ENCODE measurements at regions of chr3 and their contacts with region 1.

Region 1: DNA sequence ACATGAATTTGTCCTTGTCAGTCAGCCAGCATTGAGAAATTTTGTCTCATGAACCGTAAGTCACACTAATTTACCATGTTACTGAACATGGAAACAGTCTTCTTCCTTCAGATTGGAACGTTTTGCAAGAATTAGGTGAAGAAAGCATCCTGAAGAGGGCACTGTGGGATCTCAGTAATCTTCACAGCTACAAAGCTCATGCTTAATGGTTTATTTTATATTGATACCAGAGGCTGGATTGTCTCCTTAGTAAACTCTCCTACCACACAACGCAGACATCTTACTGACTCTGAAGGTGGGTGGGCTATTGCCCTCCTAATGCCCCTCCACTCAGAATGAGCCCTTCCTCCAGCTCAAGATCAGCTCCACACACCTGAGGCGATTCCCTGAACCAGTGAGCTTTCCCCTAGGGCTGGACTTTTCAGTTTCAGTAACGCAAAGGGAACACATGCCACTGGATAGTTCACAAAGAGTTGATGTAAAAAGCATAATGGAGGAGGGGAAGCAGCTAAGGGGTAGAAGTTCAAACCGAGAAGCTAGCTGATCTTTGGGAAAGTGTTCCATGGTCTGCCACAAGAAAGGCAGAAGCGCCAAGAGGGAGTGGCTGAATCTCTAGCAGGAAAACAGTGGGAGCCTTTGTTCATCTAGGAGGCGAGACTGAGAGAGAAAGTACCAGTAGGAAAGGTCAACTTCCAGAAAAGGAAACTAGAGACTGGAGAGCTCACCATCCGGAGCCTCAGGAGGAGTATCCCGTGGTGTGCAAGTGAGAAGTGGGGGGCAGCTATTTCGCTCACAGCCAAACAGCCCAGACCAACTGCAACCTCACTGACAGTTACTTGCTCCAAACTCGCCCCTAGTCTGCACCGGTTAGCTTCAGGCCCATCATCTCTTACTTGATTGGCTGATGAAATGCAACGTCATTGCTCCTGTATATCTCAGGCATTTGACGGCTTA is at the start of gene SLC9C1:
- DNase-seq: no peak
- H3K4me3 Mint-ChIP-seq: peak within 1 kb of the TSS; percentile 56
- H3K27ac Mint-ChIP-seq: no peak within 1 kb of the TSS
- H3K4me1 Mint-ChIP-seq: peaks cover 23% of the 10 kb centered on the region
- H3K27me3 Mint-ChIP-seq: no peaks in the 10 kb centered on the region
- total RNA-seq, gene SLC9C1: not detected

Region 2: GRCh38 chr3:112111785-112112402 is 181.8 kb before region 1 on chr3:
- CTCF ChIA-PET with region 1: interaction called, 42 read pairs
- POLR2A ChIA-PET with region 1: no interaction called
- intact Hi-C with region 1: no loop called
- DNase-seq: peak; percentile 71
- H3K4me3 Mint-ChIP-seq: no peak overlapping the region
- H3K27ac Mint-ChIP-seq: no peak overlapping the region
- H3K4me1 Mint-ChIP-seq: peaks cover 7% of the 10 kb centered on the region
- H3K27me3 Mint-ChIP-seq: no peaks in the 10 kb centered on the region

Region 3: DNA sequence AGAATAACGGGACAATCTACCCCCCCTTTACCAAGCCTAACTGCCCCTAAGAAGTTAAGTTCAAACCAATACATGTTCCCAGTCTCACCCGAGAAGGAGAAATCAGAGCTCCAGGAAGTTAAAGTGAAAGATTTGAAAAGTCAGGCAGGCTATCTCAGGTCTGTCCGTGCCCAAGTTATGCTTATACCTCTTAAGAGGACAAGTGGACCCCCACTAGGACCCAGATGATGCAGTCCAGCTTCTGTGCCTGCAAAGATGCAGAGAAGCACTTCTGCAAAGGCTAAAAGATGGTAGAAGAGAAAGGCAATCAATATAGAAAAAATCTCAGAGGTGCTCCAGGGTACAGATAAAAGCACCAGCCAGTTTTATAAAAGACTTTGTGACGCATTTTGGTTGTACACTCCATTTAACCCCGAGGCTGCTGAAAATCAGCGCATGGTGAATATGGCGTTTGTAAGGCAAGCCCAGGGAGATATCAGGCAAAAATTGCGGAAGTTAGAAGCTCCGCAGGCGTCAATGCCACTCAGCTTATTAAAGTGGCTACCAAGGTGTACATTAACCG is 10.2 kb after region 1 on chr3:
- CTCF ChIA-PET with region 1: interaction called, 33 read pairs
- POLR2A ChIA-PET with region 1: no interaction called
- intact Hi-C with region 1: no loop called
- DNase-seq: no peak
- H3K4me3 Mint-ChIP-seq: no peak overlapping the region
- H3K27ac Mint-ChIP-seq: no peak overlapping the region
- H3K4me1 Mint-ChIP-seq: peaks cover under 1% of the 10 kb centered on the region
- H3K27me3 Mint-ChIP-seq: no peaks in the 10 kb centered on the region

Region 4: DNA sequence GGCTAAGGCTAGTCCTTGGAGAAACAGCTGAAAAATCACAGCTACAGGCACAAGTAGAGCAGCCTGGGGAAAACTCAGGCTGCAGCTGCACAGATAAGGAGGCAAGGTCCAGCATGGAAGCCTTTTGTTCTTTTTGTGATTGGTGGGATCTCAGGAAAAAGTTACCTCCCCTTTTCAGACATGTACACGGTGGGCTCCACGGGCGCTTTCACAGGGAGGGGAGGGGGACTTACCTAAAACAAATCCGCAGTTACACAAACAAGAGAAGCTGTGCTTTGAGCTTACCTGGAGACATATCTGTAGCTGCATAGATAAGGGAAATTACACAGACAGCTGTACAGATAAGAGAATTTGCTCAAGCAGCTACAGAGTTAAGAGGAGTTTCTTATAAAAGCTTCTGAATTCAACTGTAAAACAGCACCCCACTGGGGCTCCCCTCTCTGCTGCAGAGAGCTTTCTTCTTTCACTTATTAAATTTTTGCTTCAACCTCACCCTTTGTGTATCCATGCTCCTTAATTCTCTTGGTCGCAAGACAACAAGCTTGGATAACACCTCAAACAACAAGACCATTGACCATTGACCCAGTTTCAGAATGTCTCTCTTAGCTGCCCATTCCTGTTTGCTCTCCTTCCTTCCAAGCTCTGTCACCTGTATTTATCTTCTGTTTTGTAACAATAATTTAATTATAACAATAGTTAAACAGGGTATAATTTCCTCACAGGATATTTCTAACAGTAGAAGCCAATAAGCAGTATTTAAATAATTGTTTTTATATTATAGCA is 28.4 kb after region 1 on chr3:
- CTCF ChIA-PET with region 1: interaction called, 20 read pairs
- POLR2A ChIA-PET with region 1: no interaction called
- intact Hi-C with region 1: no loop called
- DNase-seq: no peak
- H3K4me3 Mint-ChIP-seq: no peak overlapping the region
- H3K27ac Mint-ChIP-seq: no peak overlapping the region
- H3K4me1 Mint-ChIP-seq: no peaks in the 10 kb centered on the region
- H3K27me3 Mint-ChIP-seq: peaks cover 5% of the 10 kb centered on the region

Region 5: DNA sequence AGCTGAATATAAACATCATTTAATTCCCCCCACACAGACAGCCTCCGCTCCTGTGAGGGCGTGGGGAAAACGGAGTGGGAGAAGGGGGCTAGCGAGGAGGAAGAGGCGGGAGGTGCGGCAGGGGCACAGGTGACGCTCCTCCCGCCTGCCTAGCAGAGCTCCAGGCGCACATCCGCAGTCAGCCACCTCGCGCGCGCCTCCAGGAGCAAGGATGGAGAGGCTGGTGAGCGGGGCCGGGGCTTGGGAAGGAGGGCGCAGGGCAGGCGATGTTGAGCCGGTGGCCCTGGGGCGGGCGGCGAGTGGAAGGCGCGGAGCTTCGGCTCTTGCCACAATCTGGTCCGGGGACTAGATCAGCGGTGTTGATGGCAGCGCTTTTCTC is 39.3 kb after region 1 on chr3 and contains the start of gene CD200:
- CTCF ChIA-PET with region 1: interaction called, 19 read pairs
- POLR2A ChIA-PET with region 1: no interaction called
- intact Hi-C with region 1: loop called (anchors 5 kb)
- DNase-seq: peak; percentile 71
- H3K4me3 Mint-ChIP-seq: peak within 1 kb of the TSS; percentile 87
- H3K27ac Mint-ChIP-seq: peak within 1 kb of the TSS; percentile 88
- H3K4me1 Mint-ChIP-seq: peaks cover 46% of the 10 kb centered on the region
- H3K27me3 Mint-ChIP-seq: no peaks in the 10 kb centered on the region
- total RNA-seq, gene CD200: 34.2 to 34.5 TPM

Region 6: DNA sequence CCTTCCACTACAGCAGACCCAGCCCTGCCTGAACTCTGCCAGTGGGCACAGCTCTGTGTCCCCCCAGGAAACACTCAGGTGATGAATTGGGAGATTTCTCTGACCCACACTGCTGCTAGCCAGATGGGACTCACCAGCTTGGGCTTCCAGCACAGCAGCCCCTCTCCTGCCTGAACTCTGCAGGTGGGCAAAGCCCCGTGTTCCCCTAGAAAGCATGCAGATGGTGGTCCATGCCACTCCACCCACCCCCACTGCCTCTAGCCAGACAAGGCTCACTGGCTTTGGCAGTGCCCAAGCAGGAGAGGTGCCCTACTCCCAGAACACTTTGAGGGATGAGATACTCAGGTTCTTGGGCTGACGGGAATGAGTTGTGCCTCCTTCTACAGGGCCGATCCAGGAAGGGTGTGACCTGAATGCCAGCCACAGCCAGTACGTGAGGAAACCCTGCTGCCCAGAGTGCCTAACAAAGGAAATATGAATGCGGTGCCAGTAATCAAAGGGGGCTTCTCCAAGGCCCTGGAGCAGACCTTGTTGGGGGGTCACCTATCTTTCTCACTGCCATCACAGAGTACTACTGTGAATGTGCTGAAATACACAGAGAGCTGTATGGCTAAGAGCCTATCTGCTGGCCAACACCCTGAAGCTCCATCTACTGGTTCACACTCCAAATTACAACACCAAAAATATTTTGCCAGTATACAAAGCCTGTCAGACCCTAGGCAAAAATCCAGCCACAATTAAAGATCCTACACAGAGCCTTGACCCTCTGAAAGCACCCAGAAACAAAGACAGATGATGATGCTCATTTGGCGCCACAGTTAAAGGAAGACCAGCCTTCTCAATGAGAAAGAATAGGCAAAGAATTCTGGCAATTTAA is 143.7 kb after region 1 on chr3:
- CTCF ChIA-PET with region 1: interaction called, 22 read pairs
- POLR2A ChIA-PET with region 1: no interaction called
- intact Hi-C with region 1: loop called (anchors 1 kb)
- DNase-seq: peak; percentile 21
- H3K4me3 Mint-ChIP-seq: no peak overlapping the region
- H3K27ac Mint-ChIP-seq: peak overlapping the region; percentile 40
- H3K4me1 Mint-ChIP-seq: peaks cover 40% of the 10 kb centered on the region
- H3K27me3 Mint-ChIP-seq: no peaks in the 10 kb centered on the region

Region 7: DNA sequence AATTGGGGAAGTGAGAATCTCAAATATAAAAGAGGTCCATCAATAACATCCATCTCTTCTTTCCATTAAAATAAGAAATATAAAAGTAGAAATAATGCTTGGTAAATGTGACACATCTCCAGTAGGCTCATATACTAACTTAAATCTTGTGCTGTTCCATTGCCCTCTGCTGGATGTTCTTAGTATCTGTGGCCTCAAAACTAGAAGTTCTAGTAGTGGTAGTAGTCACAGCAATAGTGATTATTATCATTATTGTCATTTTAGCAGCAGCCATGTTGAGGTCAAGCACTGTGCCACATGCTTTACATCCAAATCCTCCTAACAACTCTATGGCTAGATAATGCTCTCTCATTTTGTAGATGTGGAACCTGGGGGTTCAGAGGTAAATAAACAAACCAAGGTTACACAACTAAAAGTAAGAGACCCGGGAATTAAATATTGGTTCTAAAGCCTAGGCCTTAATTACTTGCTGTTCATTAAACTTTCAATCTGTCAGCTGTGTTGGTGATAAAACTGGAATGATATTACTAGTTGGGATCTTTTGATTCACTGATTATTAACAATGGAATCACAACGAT is 225.9 kb after region 1 on chr3:
- CTCF ChIA-PET with region 1: interaction called, 16 read pairs
- POLR2A ChIA-PET with region 1: no interaction called
- intact Hi-C with region 1: loop called (anchors 1 kb)
- DNase-seq: no peak
- H3K4me3 Mint-ChIP-seq: no peak overlapping the region
- H3K27ac Mint-ChIP-seq: no peak overlapping the region
- H3K4me1 Mint-ChIP-seq: peaks cover 18% of the 10 kb centered on the region
- H3K27me3 Mint-ChIP-seq: no peaks in the 10 kb centered on the region

Region 8: GRCh38 chr3:112550859-112551258 is 257.2 kb after region 1 on chr3:
- CTCF ChIA-PET with region 1: no interaction called
- POLR2A ChIA-PET with region 1: no interaction called
- intact Hi-C with region 1: no loop called
- DNase-seq: no peak
- H3K4me3 Mint-ChIP-seq: no peak overlapping the region
- H3K27ac Mint-ChIP-seq: no peak overlapping the region
- H3K4me1 Mint-ChIP-seq: peaks cover 26% of the 10 kb centered on the region
- H3K27me3 Mint-ChIP-seq: no peaks in the 10 kb centered on the region

Region 9: DNA sequence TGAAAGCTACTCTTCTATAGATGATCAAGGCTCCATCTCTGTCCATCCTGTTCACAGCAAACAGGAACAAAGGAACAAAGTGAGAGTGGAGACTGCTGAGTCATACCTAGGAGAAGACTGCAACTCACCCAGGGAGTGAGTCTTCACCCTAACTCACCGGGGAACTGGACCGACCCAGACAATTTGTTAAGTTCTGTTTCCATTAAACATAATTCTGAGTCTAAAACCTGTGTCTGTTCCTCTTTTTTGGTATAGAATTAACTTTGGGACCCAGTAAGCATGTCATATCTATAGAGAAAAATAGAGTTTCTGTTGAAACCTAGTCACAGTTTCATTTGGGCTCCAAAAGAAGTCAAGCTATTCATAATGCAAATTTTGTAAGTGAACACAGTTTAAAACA is 325.6 kb after region 1 on chr3:
- CTCF ChIA-PET with region 1: no interaction called
- POLR2A ChIA-PET with region 1: no interaction called
- intact Hi-C with region 1: no loop called
- DNase-seq: no peak
- H3K4me3 Mint-ChIP-seq: no peak overlapping the region
- H3K27ac Mint-ChIP-seq: no peak overlapping the region
- H3K4me1 Mint-ChIP-seq: no peaks in the 10 kb centered on the region
- H3K27me3 Mint-ChIP-seq: peaks cover 5% of the 10 kb centered on the region

Measured in activated CD4-positive, alpha-beta memory T cell treated with anti-CD3 and anti-CD28 coated beads for 36 hours (primary cell).